ENCODE measurements at regions of chr17 and their contacts with region 1.

Region 1: GRCh38 chr17:7915611-7916382 is at the start of gene RNF227:
- DNase-seq: peak; percentile 94
- H3K4me3 ChIP-seq: peak within 1 kb of the TSS; percentile 64 to 78 (median 76)
- H3K27ac ChIP-seq: peak within 1 kb of the TSS; percentile 83 to 94 (median 92)
- H3K4me1 ChIP-seq: peaks cover 12 to 39% (median 27%) of the 10 kb centered on the region in 6 donors
- H3K27me3 ChIP-seq: no peaks in the 10 kb centered on the region
- CTCF ChIP-seq: peak in 1 of 11 experiments; percentile 23
- POLR2A ChIP-seq: no peak
- total RNA-seq, gene RNF227: 2.5 to 20.7 (median 3.4) TPM

Region 2: GRCh38 chr17:7045909-7046724 is 869.7 kb before region 1 on chr17:
- intact Hi-C with region 1: no loop called
- DNase-seq: peak; percentile 83
- H3K4me3 ChIP-seq: peak overlapping the region in 6 of 8 donors; percentile 7 to 66 (median 33)
- H3K27ac ChIP-seq: peak overlapping the region; percentile 2 to 89 (median 76)
- H3K4me1 ChIP-seq: peaks cover 20 to 61% (median 42%) of the 10 kb centered on the region in 6 donors
- H3K27me3 ChIP-seq: peaks cover 0 to 54% (median 24%) of the 10 kb centered on the region in 7 donors
- CTCF ChIP-seq: peak in 10 of 11 experiments; percentile 65 to 86 (median 78)
- POLR2A ChIP-seq: no peak

Region 3: GRCh38 chr17:7982666-7983065 is 66.9 kb after region 1 on chr17:
- intact Hi-C with region 1: no loop called
- DNase-seq: no peak
- H3K4me3 ChIP-seq: no peak overlapping the region
- H3K27ac ChIP-seq: no peak overlapping the region
- H3K4me1 ChIP-seq: no peaks in the 10 kb centered on the region
- H3K27me3 ChIP-seq: peaks cover 0 to 21% (median 0%) of the 10 kb centered on the region in 7 donors
- CTCF ChIP-seq: no peak
- POLR2A ChIP-seq: no peak

Region 4: DNA sequence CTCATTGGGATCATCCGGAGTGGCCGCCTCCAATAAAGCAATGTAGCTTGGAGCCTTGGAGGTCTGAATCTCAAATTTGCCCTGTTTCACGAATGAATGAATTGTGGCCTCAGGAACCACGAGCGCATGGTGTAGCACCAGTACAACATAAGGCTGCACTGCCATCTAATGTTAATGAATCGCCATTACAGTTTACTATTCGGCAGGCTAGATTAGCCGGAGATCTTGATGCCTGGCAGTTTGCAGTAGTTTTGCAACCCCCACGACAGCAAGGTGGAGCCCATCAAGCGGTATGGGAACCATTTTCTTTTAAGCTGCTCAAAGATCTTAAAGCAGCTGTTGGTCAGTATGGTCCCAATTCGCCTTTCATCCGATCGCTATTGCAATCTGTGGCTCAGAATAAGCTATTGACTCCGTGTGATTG is 141.9 kb after region 1 on chr17:
- intact Hi-C with region 1: loop called (anchors 5 kb)
- DNase-seq: peak; percentile 53
- H3K4me3 ChIP-seq: no peak overlapping the region
- H3K27ac ChIP-seq: no peak overlapping the region
- H3K4me1 ChIP-seq: peaks cover 0 to 39% (median 27%) of the 10 kb centered on the region in 6 donors
- H3K27me3 ChIP-seq: peaks cover 0 to 56% (median 35%) of the 10 kb centered on the region in 7 donors
- CTCF ChIP-seq: peak; percentile 69 to 92 (median 83)
- POLR2A ChIP-seq: no peak

Measured in spleen (tissue), 13 donors.